ENCODE measurements at regions of chr16 and their contacts with region 1.

Region 1: GRCh38 chr16:85755929-85756768 is 5.3 kb upstream of the C16orf74 start:
- DNase-seq: no peak
- ATAC-seq: peak; percentile 27
- H3K4me3 Mint-ChIP-seq: no peak overlapping the region
- H3K27ac Mint-ChIP-seq: no peak overlapping the region
- H3K4me1 Mint-ChIP-seq: peaks cover 14% of the 10 kb centered on the region
- H3K27me3 Mint-ChIP-seq: peaks cover 30% of the 10 kb centered on the region

Region 2: DNA sequence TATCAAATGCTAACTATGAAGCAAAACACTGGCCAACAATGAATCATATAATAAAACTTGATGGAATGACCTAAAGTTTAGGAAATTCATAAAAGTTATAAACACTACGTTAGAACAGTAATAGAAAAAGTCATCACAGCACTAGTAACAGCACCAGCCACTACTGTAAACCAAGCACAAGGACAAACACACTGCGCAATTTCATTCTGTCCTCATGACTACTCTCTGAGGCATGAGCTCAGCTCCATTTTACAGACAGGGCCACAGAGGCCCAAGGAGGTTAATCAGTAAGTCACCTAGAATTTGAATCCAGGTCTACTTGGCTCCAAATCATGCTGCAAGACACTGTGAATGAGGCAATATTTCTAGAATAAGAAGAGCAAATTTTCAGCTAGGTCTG is 29.8 kb after region 1 on chr16:
- CTCF ChIA-PET with region 1: interaction called, 3 read pairs
- POLR2A ChIA-PET with region 1: no interaction called
- intact Hi-C with region 1: loop called in 1 of 2 experiments (anchors 1 kb)
- DNase-seq: no peak
- ATAC-seq: no peak
- H3K4me3 Mint-ChIP-seq: no peak overlapping the region
- H3K27ac Mint-ChIP-seq: no peak overlapping the region
- H3K4me1 Mint-ChIP-seq: peaks cover 12% of the 10 kb centered on the region
- H3K27me3 Mint-ChIP-seq: no peaks in the 10 kb centered on the region